ENCODE measurements at regions of chr10 and their contacts with region 1.

Region 1: GRCh38 chr10:53013201-53013810 is 240.7 kb upstream of the MBL2 start:
- DNase-seq: no peak
- H3K4me3 ChIP-seq: no peak overlapping the region
- H3K27ac ChIP-seq: no peak overlapping the region
- H3K27me3 ChIP-seq: no peaks in the 10 kb centered on the region
- CTCF ChIP-seq: no peak

Region 2: GRCh38 chr10:52313933-52314816 is 699.1 kb before region 1 on chr10 and contains the start of gene DKK1:
- CTCF ChIA-PET with region 1: interaction called, 10 read pairs
- POLR2A ChIA-PET with region 1: no interaction called
- DNase-seq: no peak
- H3K4me3 ChIP-seq: peak within 1 kb of the TSS; percentile 95
- H3K27ac ChIP-seq: peak within 1 kb of the TSS; percentile 79
- H3K27me3 ChIP-seq: no peaks in the 10 kb centered on the region
- CTCF ChIP-seq: peak; percentile 89
- polyA plus RNA-seq, gene DKK1: 21.9 and 35.2 TPM in 2 replicates